OCI-LY7 (cell line): ENCODE measurements at regions of chr1 and their contacts with region 1.

Region 1: DNA sequence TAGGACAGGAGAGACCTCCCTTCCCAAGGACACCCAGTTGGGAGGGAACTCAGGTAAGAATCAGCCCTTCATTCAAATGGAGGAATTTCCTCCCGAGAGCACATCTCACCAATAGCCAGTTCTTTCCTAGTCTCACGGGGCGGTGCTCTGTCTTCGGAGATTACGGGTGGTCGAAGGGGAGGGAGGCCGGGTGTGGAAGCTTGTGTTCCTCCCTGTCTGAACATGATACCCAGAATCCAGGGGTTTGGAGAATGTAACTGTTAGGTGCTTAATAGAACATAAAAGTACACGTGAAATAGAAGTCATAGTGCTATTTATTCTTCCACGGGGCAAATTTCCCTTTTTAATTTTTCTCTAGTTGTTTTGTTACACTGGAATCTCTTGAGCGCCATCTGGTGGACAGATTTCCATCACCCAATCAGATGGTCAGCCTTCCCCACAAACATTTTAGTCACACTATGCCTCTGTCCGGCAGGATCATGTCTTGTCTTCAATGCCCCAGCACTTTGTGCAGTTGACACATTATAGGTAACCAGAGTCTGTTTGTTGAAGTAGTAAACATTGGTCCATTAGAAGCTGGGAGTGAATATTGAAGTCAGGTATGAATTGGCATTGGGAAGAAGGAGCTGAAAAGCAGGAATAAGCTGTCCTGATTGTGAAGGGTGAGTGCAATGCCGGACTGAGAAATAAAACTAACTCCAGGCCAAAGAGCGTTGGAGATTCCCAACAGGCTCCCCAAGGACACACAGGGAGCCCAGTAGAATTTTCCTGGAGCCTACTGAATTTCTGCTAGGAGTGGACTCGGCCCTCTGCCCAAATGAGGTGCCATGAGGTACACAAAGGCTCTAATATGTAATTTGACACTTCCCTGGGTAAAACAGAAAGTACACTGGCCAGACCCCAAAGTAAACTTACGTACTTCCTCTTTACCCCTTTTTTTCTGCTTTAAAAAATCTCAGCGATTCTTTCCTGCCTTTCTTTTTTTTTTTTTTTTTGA is 27.6 kb upstream of the ZNF697 start:
- DNase-seq: peak; percentile 75
- H3K4me3 ChIP-seq: no peak overlapping the region
- H3K27ac ChIP-seq: no peak overlapping the region
- H3K4me1 ChIP-seq: no peaks in the 10 kb centered on the region
- CTCF ChIP-seq: peak; percentile 96

Region 2: GRCh38 chr1:119686649-119687048 is 11.0 kb after region 1 on chr1:
- CTCF ChIA-PET with region 1: no interaction called
- POLR2A ChIA-PET with region 1: no interaction called
- intact Hi-C with region 1: no loop called
- DNase-seq: no peak
- H3K4me3 ChIP-seq: no peak overlapping the region
- H3K27ac ChIP-seq: no peak overlapping the region
- H3K4me1 ChIP-seq: no peaks in the 10 kb centered on the region
- CTCF ChIP-seq: no peak

Region 3: DNA sequence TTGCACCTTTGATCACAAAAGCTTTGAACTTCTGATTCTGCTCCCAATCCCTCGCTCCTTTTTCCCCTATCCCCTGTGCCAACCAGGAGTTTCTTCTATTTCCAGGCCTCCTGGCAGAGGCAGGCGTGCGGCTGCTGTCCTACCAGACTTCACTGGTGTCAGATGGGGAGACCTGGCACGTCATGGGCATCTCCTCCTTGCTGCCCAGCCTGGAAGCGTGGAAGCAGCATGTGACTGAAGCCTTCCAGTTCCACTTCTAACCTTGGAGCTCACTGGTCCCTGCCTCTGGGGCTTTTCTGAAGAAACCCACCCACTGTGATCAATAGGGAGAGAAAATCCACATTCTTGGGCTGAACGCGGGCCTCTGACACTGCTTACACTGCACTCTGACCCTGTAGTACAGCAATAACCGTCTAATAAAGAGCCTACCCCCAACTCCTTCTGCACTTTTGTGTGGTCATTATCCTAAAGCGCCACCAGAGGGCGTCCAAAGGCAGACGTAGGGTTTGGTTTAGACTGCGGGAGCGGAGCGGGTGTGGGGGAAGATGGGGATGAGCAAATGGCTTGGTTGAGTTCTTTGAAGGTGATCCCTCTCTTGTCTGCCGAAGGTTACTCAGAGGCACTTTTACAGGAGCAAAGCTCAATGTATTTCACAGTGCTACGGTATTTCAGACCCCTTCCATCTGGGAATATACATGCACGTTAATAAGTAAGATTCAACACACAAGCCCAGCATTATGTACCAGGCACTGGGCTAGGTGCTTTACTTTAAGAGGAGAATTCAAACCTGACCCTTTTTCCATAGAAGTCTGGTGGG is 68.3 kb after region 1 on chr1:
- CTCF ChIA-PET with region 1: no interaction called
- POLR2A ChIA-PET with region 1: no interaction called
- intact Hi-C with region 1: no loop called
- DNase-seq: peak; percentile 63
- H3K4me3 ChIP-seq: no peak overlapping the region
- H3K27ac ChIP-seq: no peak overlapping the region
- H3K4me1 ChIP-seq: no peaks in the 10 kb centered on the region
- CTCF ChIP-seq: peak; percentile 91

Region 4: DNA sequence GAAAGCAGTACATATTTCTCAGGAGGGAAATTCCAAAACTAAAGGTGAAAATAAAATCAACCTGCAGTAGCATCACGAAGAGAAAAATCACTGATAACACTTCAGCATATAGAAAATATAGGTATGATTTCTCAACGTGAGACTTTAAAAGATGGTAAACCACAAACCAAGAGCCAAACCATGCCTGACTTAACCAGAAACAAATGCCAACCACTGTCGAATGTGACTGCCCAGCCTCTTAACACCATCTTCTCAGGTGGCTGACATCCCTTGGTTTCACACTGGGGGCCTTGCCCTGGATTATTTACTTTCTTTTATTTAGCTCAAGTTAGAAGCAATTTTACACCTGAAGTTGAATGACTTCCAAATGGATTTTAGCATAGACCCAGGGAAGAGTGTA is 82.9 kb after region 1 on chr1:
- CTCF ChIA-PET with region 1: no interaction called
- POLR2A ChIA-PET with region 1: no interaction called
- intact Hi-C with region 1: loop called (anchors 10 kb)
- DNase-seq: no peak
- H3K4me3 ChIP-seq: no peak overlapping the region
- H3K27ac ChIP-seq: no peak overlapping the region
- H3K4me1 ChIP-seq: no peaks in the 10 kb centered on the region
- CTCF ChIP-seq: no peak